Activated T-helper 2 cell treated with anti-CD3 and anti-CD28 coated beads, Interferon-gamma antibody, Interleukin-2, Interleukin-4, amounts not matched to agents 10 μg/mL and 5 μg/mL and 100 μg/mL, durations not matched to agents 14 hours and 24 hours and 36 hours (primary cell): ENCODE measurements at regions of chr20 and their contacts with region 1.

Region 1: DNA sequence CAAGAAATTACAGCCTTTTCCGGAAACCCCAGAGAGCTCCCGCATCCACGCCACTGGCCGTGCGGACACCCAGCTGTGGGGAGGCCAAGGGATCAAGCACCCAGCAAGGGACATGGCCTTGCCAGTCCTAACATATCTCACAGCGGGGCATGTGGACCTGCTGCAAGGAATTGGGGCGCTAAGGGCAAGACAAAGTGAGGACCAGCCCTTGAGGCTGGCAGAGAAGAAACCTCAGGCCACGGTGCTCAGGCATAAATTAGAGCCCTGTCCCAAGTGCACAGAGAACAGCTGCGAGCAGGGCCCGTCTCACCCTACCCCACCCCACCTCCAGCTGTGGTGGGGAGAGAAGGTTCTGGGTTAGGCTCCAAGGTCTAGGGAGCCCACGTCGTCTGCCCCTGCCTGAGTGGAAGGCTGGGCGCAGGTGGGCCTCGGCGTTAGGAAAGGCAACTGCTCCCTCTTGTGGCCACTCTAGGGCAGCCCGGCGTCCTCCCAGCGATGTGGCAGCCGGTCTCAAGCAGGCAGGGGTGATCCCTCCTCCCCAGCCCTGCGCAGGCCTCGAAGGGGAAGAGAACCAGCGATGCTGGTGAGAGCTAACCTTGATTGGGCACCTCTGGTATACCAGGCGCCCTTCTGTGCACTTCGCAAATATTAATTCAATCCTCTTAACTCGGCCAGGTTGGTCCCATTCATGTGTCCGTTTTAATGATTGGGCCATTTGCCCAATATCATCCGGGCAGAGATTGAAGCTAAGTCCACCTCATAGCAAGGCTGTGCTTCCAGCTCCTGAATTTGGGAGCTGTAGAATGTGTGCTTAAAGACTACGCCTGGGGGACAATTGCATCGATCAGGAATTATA is 235.8 kb downstream of the NFATC2 start:
- DNase-seq: peak; percentile 43
- H3K4me3 Mint-ChIP-seq: no peak overlapping the region
- H3K27ac Mint-ChIP-seq: no peak overlapping the region
- H3K4me1 Mint-ChIP-seq: no peaks in the 10 kb centered on the region
- H3K27me3 Mint-ChIP-seq: peaks cover 17% of the 10 kb centered on the region

Region 2: GRCh38 chr20:50992733-50993457 is 313.8 kb before region 1 on chr20:
- intact Hi-C with region 1: loop called (anchors 1 kb)
- DNase-seq: peak; percentile 41
- H3K4me3 Mint-ChIP-seq: no peak overlapping the region
- H3K27ac Mint-ChIP-seq: no peak overlapping the region
- H3K4me1 Mint-ChIP-seq: peaks cover 2% of the 10 kb centered on the region
- H3K27me3 Mint-ChIP-seq: no peaks in the 10 kb centered on the region

Region 3: GRCh38 chr20:51220293-51220706 is 86.4 kb before region 1 on chr20:
- intact Hi-C with region 1: loop called (anchors 2 kb)
- DNase-seq: peak; percentile 37
- H3K4me3 Mint-ChIP-seq: no peak overlapping the region
- H3K27ac Mint-ChIP-seq: no peak overlapping the region
- H3K4me1 Mint-ChIP-seq: peaks cover 4% of the 10 kb centered on the region
- H3K27me3 Mint-ChIP-seq: peaks cover 28% of the 10 kb centered on the region